T-cell (primary cell): ENCODE measurements at regions of chr1 and their contacts with region 1.

Region 1: DNA sequence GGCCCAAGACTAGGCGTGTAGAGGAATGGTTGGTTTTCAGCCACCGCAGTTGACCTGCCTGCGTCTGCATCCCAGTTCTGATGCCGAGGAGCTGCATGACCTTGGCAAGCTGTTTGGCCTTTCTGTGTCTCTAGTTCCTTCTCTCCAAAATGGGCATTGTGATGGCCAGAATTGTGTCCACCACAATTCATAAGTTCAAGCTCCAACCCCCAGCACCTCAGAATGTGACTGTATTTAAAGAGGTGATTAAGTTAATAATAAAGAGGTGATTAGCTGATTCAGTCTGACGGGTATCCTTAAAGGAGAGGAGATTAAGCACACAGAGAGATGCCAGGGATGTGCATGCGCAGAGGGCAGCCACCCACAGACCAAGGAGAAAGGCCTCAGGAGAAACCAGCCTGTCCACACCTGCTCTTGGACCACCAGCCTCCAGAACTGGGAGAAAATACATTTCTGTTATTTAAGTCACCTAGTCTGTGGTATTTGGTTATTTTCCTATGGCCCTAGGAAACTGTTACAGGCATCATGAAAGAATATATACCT is 28.5 kb downstream of the MAB21L3 start:
- DNase-seq: no peak
- ATAC-seq: no peak
- H3K4me3 ChIP-seq: no peak overlapping the region
- H3K4me3 Mint-ChIP-seq: no peak overlapping the region
- H3K27ac ChIP-seq: no peak overlapping the region
- H3K27ac Mint-ChIP-seq: no peak overlapping the region
- H3K4me1 ChIP-seq: peaks cover 0 to 8% of the 10 kb centered on the region in 2 experiments
- H3K4me1 Mint-ChIP-seq: peaks cover 0 to 6% (median 5%) of the 10 kb centered on the region in 3 donors
- H3K27me3 ChIP-seq: peaks cover 0 to 3% of the 10 kb centered on the region in 2 experiments
- H3K27me3 Mint-ChIP-seq: peaks cover 0 to 5% of the 10 kb centered on the region in 2 donors

Region 2: GRCh38 chr1:116151739-116152576 is 12.3 kb after region 1 on chr1:
- CTCF ChIA-PET with region 1: interaction called, 14 to 30 read pairs
- POLR2A ChIA-PET with region 1: no interaction called
- DNase-seq: peak; percentile 55 to 92 (median 70)
- ATAC-seq: peak; percentile 86 to 92 (median 88)
- H3K4me3 ChIP-seq: peak overlapping the region; percentile 42 to 58
- H3K4me3 Mint-ChIP-seq: peak overlapping the region; percentile 63 to 75 (median 70)
- H3K27ac ChIP-seq: peak overlapping the region; percentile 28
- H3K27ac Mint-ChIP-seq: peak overlapping the region; percentile 85 to 88
- H3K4me1 ChIP-seq: peaks cover 17 to 24% of the 10 kb centered on the region in 2 experiments
- H3K4me1 Mint-ChIP-seq: peaks cover 21 to 32% (median 23%) of the 10 kb centered on the region in 3 donors
- H3K27me3 ChIP-seq: peaks cover 0 to 3% of the 10 kb centered on the region in 2 experiments
- H3K27me3 Mint-ChIP-seq: peaks cover 0 to 3% of the 10 kb centered on the region in 2 donors

Region 3: DNA sequence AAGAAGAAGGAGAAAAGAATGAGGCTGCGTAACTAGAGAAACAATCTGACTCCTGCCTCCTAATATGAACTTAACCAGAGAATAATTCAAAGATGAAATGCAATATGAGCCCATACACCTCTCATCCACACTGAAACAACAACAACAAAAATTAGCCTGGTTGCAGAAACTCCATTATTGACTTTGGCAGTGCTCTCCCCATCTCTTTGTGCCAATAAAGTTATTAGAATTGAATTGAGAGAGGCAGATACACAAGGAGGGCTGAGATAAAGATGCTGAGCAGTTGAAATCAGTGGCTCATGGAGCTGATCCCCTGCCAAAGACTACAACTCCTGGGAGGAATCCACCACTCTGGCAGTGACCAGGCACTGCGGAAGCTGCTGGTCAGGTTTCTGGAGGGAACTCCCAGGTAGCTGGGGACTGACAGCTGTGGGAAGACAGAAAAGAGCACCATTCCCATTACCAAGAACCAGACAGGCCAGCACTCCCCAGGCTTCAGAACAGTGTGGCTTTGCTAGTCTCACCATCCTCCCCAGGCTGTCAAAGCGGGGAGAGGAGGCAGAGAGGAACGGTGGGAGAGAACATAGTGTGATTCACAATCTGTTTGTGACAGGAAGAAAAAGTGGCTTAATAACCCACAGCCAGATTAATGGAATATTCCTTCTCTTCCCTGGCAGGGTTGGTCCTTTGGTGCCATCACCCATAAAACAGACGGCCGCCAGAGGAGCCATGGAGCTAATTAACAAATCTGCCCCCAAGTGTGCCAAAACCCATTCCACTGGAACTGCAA is 63.5 kb after region 1 on chr1:
- CTCF ChIA-PET with region 1: no interaction called
- POLR2A ChIA-PET with region 1: no interaction called
- DNase-seq: no peak
- ATAC-seq: no peak
- H3K4me3 ChIP-seq: no peak overlapping the region
- H3K4me3 Mint-ChIP-seq: no peak overlapping the region
- H3K27ac ChIP-seq: no peak overlapping the region
- H3K27ac Mint-ChIP-seq: no peak overlapping the region
- H3K4me1 ChIP-seq: no peaks in the 10 kb centered on the region
- H3K4me1 Mint-ChIP-seq: no peaks in the 10 kb centered on the region
- H3K27me3 ChIP-seq: peaks cover 0 to 5% of the 10 kb centered on the region in 2 experiments
- H3K27me3 Mint-ChIP-seq: peaks cover 16 to 17% of the 10 kb centered on the region in 2 donors

Region 4: GRCh38 chr1:116485071-116485735 is 345.5 kb after region 1 on chr1:
- CTCF ChIA-PET with region 1: interaction called, 98 to 168 read pairs
- POLR2A ChIA-PET with region 1: no interaction called
- DNase-seq: peak; percentile 51 to 93 (median 83)
- ATAC-seq: peak; percentile 81 to 95 (median 94)
- H3K4me3 ChIP-seq: no peak overlapping the region
- H3K4me3 Mint-ChIP-seq: no peak overlapping the region
- H3K27ac ChIP-seq: no peak overlapping the region
- H3K27ac Mint-ChIP-seq: no peak overlapping the region
- H3K4me1 ChIP-seq: peaks cover 0 to 4% of the 10 kb centered on the region in 2 experiments
- H3K4me1 Mint-ChIP-seq: no peaks in the 10 kb centered on the region
- H3K27me3 ChIP-seq: no peaks in the 10 kb centered on the region
- H3K27me3 Mint-ChIP-seq: no peaks in the 10 kb centered on the region

Region 5: GRCh38 chr1:116492358-116492811 is 352.7 kb after region 1 on chr1:
- CTCF ChIA-PET with region 1: interaction called, 98 to 168 read pairs
- POLR2A ChIA-PET with region 1: no interaction called
- DNase-seq: no peak
- ATAC-seq: no peak
- H3K4me3 ChIP-seq: no peak overlapping the region
- H3K4me3 Mint-ChIP-seq: no peak overlapping the region
- H3K27ac ChIP-seq: no peak overlapping the region
- H3K27ac Mint-ChIP-seq: no peak overlapping the region
- H3K4me1 ChIP-seq: peaks cover 0 to 6% of the 10 kb centered on the region in 2 experiments
- H3K4me1 Mint-ChIP-seq: peaks cover 2 to 16% (median 8%) of the 10 kb centered on the region in 3 donors
- H3K27me3 ChIP-seq: no peaks in the 10 kb centered on the region
- H3K27me3 Mint-ChIP-seq: no peaks in the 10 kb centered on the region

Region 6: GRCh38 chr1:116498789-116499628 is 359.3 kb after region 1 on chr1:
- CTCF ChIA-PET with region 1: interaction called, 21 to 43 read pairs
- POLR2A ChIA-PET with region 1: no interaction called
- DNase-seq: peak in 20 of 35 experiments; percentile 16 to 74 (median 30)
- ATAC-seq: peak; percentile 75 to 83 (median 78)
- H3K4me3 ChIP-seq: no peak overlapping the region
- H3K4me3 Mint-ChIP-seq: no peak overlapping the region
- H3K27ac ChIP-seq: no peak overlapping the region
- H3K27ac Mint-ChIP-seq: peak overlapping the region in 1 of 2 donors; percentile 4
- H3K4me1 ChIP-seq: peaks cover 9 to 29% of the 10 kb centered on the region in 2 experiments
- H3K4me1 Mint-ChIP-seq: peaks cover 23 to 39% (median 34%) of the 10 kb centered on the region in 3 donors
- H3K27me3 ChIP-seq: no peaks in the 10 kb centered on the region
- H3K27me3 Mint-ChIP-seq: no peaks in the 10 kb centered on the region

Region 7: DNA sequence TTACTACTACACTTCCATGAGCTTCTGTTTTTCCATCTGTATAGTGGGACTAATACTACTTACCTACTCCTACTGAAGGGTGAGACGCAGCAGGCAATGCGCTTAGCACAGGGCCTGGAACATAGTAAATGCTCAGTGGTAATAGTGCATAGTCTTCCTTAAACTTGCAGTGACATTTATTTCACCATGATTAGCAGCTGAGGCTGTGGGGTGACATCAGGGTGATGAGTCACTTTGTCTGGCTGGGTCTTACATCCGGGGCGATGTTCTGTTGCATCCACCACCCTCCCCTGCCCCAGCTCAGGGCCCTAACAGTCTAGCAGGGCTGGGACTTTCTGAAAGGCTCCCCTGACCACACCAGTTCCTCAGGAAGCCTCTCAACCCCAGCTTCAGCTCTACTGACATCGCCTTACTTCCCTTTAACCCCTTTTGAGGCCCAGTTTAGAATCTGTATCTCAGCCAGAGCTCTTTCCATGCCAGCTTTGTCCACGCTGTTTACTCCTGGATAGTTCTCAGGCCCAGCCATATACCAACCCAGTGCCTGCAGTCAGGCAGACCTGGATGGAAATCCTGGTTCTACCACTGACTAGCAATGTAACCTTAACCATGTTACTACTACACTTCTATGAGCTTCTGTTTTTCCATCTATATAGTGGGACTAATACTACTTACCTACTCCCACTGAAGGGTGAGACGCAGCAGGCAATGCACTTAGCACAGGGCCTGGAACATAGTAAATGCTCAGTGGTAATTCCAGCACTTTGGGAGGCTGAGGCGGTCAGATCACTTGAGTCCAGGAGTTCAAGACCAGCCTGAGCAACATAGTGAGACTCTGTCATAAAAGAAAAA is 364.9 kb after region 1 on chr1:
- CTCF ChIA-PET with region 1: interaction called, 21 to 43 read pairs
- POLR2A ChIA-PET with region 1: no interaction called
- DNase-seq: peak; percentile 59 to 93 (median 84)
- ATAC-seq: peak; percentile 98 to 99 (median 99)
- H3K4me3 ChIP-seq: no peak overlapping the region
- H3K4me3 Mint-ChIP-seq: peak overlapping the region in 2 of 3 donors; percentile 34 to 55
- H3K27ac ChIP-seq: peak overlapping the region; percentile 81
- H3K27ac Mint-ChIP-seq: peak overlapping the region; percentile 90 to 93
- H3K4me1 ChIP-seq: peaks cover 20 to 51% of the 10 kb centered on the region in 2 experiments
- H3K4me1 Mint-ChIP-seq: peaks cover 49 to 70% (median 59%) of the 10 kb centered on the region in 3 donors
- H3K27me3 ChIP-seq: no peaks in the 10 kb centered on the region
- H3K27me3 Mint-ChIP-seq: no peaks in the 10 kb centered on the region

Region 8: GRCh38 chr1:116567790-116568661 is 428.4 kb after region 1 on chr1:
- CTCF ChIA-PET with region 1: interaction called in 1 of 2 experiments, 10 read pairs
- POLR2A ChIA-PET with region 1: no interaction called
- DNase-seq: no peak
- ATAC-seq: no peak
- H3K4me3 ChIP-seq: no peak overlapping the region
- H3K4me3 Mint-ChIP-seq: peak overlapping the region; percentile 85 to 95 (median 91)
- H3K27ac ChIP-seq: peak overlapping the region; percentile 4
- H3K27ac Mint-ChIP-seq: peak overlapping the region; percentile 87 to 93
- H3K4me1 ChIP-seq: peaks cover 0 to 38% of the 10 kb centered on the region in 2 experiments
- H3K4me1 Mint-ChIP-seq: peaks cover 41 to 68% (median 57%) of the 10 kb centered on the region in 3 donors
- H3K27me3 ChIP-seq: no peaks in the 10 kb centered on the region
- H3K27me3 Mint-ChIP-seq: no peaks in the 10 kb centered on the region